Activated CD4-positive, alpha-beta memory T cell treated with anti-CD3 and anti-CD28 coated beads for 36 hours (primary cell): ENCODE measurements at regions of chr1 and their contacts with region 1.

Region 1: GRCh38 chr1:2545759-2546514 is 10.2 kb upstream of the TNFRSF14 start:
- DNase-seq: peak; percentile 91
- H3K4me3 Mint-ChIP-seq: peak overlapping the region; percentile 80
- H3K27ac Mint-ChIP-seq: peak overlapping the region; percentile 99
- H3K4me1 Mint-ChIP-seq: peaks cover 18% of the 10 kb centered on the region
- H3K27me3 Mint-ChIP-seq: no peaks in the 10 kb centered on the region

Region 2: DNA sequence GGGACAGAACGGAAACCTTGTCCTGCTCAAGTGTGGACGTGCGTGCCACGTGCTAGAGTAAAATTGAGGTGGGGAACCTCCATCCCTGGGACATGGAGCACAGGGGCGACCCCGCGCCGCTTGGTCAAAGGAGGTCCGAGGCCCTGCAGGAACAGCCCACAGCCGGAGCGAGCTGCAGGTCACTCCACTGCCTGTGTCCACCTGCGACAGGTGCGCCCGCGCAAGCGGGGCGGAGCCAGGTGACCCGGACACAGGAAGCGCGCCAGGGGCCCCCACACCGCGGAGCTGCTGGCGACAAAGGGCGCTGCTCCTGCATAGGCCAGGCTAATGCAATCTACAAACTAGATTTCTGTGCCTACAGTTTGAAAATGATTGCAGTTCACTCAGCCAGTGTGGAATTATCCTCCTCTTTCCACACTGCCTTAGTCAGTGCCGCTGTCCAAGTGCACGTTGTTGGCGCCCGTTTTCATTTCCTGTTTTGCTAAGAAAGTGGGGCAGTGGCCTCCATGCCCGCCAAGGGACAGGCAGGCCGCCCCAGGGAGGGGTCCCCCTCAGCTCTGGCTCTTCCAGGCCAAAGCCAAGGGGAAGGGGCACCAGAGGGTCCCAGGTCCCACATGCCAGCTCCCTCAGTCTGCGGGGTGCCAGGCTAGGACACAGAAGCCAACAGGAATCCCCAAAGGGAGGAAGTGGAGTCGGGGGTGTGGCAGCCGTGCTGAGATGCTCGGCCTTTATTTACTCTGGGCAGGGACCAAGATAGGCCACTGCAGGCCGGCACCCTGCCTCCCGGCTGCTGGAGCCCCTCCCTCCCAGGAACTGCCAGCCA is 763.3 kb before region 1 on chr1:
- CTCF ChIA-PET with region 1: no interaction called
- POLR2A ChIA-PET with region 1: no interaction called
- intact Hi-C with region 1: no loop called
- DNase-seq: peak; percentile 50
- H3K4me3 Mint-ChIP-seq: no peak overlapping the region
- H3K27ac Mint-ChIP-seq: peak overlapping the region; percentile 58
- H3K4me1 Mint-ChIP-seq: peaks cover 44% of the 10 kb centered on the region
- H3K27me3 Mint-ChIP-seq: no peaks in the 10 kb centered on the region

Region 3: DNA sequence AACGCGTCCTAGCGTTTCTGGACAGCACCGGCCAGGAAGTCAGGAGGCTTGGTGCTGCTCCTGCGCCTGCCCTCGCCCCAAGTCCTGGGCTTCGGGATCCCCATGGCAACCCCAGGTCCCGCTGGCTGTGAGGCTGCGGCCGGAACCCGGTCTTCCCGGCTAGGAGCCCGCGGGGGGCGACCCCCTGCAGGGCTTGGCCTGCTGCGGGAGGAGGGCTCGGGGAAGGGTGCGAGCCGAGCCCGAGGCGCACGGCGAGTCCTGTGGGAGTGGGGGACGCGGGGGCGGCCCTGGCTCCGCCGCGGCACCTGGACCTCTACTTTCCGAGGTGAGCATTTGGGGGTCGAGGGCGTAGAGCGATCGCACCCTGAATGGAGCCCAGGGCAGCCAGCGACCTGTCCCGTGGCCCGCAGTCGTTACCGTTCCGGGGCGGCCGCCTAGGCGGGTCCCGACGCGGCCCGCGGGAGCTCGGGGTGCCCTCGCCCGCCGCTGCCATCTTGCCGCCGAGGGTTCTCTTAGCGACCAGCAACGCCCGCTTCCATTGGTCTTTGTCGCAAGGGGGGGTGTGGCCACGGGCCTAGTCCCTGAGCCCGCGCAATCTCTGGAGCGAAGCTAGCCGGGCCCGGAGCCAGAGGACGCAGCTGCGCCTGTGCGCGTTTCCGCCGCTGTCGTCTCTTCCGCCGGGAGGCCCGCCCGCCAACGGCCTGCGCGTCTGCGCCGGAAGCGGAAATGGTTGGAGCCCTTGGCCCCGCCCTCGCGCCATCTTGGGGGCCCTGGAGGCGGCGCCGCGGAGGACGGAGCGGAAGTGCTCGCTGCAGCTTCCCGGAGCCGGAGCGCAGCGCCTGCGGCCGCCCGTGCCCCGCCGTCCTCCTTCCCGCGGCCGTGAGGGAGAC is 154.7 kb before region 1 on chr1 and contains the starts of genes MORN1 and RER1:
- CTCF ChIA-PET with region 1: interaction called, 7 read pairs
- POLR2A ChIA-PET with region 1: interaction called, 4 read pairs
- intact Hi-C with region 1: loop called (anchors 5 kb)
- DNase-seq: peak; percentile 99
- H3K4me3 Mint-ChIP-seq: peak within 1 kb of the TSS; percentile 93
- H3K27ac Mint-ChIP-seq: peak within 1 kb of the TSS; percentile 84
- H3K4me1 Mint-ChIP-seq: peaks cover 39% of the 10 kb centered on the region
- H3K27me3 Mint-ChIP-seq: no peaks in the 10 kb centered on the region
- total RNA-seq, gene MORN1: 5.4 to 6.3 TPM
- total RNA-seq, gene RER1: 148 to 154 TPM

Region 4: GRCh38 chr1:2512862-2513421 is 33.0 kb before region 1 on chr1:
- CTCF ChIA-PET with region 1: no interaction called
- POLR2A ChIA-PET with region 1: no interaction called
- intact Hi-C with region 1: no loop called
- DNase-seq: no peak
- H3K4me3 Mint-ChIP-seq: no peak overlapping the region
- H3K27ac Mint-ChIP-seq: no peak overlapping the region
- H3K4me1 Mint-ChIP-seq: no peaks in the 10 kb centered on the region
- H3K27me3 Mint-ChIP-seq: no peaks in the 10 kb centered on the region

Region 5: GRCh38 chr1:2525920-2526823 is 19.8 kb before region 1 on chr1 and contains the start of gene PANK4:
- CTCF ChIA-PET with region 1: interaction called, 29 read pairs
- POLR2A ChIA-PET with region 1: interaction called, 53 read pairs
- intact Hi-C with region 1: loop called (anchors 1 kb)
- DNase-seq: peak; percentile 92
- H3K4me3 Mint-ChIP-seq: peak within 1 kb of the TSS; percentile 85
- H3K27ac Mint-ChIP-seq: peak within 1 kb of the TSS; percentile 92
- H3K4me1 Mint-ChIP-seq: peaks cover 45% of the 10 kb centered on the region
- H3K27me3 Mint-ChIP-seq: peaks cover 5% of the 10 kb centered on the region
- total RNA-seq, gene PANK4: 42.6 to 45.1 TPM

Region 6: DNA sequence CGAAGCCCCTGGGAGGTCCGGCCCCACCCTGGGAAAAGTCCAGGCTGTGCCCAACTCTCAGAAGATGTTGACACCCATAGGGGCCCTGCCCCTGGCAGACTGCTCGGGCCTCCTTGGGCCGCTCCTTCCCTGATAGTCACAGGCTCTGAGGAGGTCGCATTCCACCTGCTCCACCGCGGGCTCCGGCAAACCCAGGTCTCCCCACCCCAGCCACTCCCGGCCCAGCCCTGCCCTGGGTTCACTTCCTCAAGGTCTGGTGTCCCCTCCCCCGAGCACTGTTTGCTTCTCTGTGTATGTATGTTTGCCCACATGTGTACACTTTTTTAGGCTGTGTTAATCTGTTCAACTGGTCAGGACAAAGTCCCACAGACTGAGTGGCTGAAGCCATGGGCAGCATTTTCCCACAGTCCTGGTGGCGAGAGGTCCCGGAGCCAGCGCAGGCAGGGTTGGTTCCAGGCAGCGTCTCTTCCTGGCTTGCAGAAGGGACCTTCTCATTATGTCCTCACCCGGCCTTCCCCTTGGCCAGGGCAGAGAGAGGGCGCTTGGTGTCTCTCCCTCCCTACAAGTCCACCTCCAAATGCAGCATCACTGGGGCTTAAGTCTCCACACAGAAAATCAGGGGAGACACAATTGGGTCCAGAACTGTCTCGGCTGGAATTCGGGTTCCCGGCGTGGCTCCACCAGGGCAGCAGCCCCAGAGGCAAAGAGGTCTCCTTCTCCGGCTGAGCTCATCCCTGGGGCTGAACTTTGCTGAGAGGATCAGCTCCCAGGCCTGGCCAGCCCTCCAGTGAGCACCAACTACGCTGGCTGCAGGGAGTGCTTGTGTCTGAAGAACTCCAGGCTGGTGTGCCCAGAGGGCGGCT is 30.1 kb after region 1 on chr1:
- CTCF ChIA-PET with region 1: interaction called, 9 read pairs
- POLR2A ChIA-PET with region 1: interaction called, 26 read pairs
- intact Hi-C with region 1: loop called (anchors 1 kb)
- DNase-seq: no peak
- H3K4me3 Mint-ChIP-seq: no peak overlapping the region
- H3K27ac Mint-ChIP-seq: peak overlapping the region; percentile 97
- H3K4me1 Mint-ChIP-seq: peaks cover 39% of the 10 kb centered on the region
- H3K27me3 Mint-ChIP-seq: no peaks in the 10 kb centered on the region

Region 7: GRCh38 chr1:2642560-2643413 is 96.8 kb after region 1 on chr1:
- CTCF ChIA-PET with region 1: no interaction called
- POLR2A ChIA-PET with region 1: no interaction called
- intact Hi-C with region 1: loop called (anchors 2 kb)
- DNase-seq: peak; percentile 97
- H3K4me3 Mint-ChIP-seq: peak overlapping the region; percentile 85
- H3K27ac Mint-ChIP-seq: peak overlapping the region; percentile 89
- H3K4me1 Mint-ChIP-seq: peaks cover 10% of the 10 kb centered on the region
- H3K27me3 Mint-ChIP-seq: no peaks in the 10 kb centered on the region